CD4-positive, alpha-beta T cell (primary cell): ENCODE measurements at regions of chr1 and their contacts with region 1.

Region 1: DNA sequence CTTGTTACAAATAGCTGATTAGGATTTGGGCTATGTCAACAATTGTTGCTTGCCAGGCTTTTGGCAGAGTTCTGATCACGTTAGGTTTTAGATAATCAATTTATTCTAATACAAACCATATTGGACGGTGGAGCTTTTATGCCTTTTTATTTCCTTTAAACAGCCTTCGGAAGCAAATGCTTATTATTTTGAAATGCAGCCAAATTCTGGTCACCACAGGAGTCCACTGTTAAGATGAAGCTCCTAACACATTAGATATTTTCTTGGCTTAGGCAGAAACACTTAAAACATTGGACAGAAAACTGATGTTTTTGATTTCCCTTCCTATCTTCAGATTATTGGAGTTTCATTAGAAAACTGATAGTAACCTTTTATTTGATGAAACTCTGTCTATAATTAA is 82.9 kb downstream of the CENPF start:
- DNase-seq: no peak
- ATAC-seq: no peak
- H3K4me3 ChIP-seq: no peak overlapping the region
- H3K4me3 Mint-ChIP-seq: no peak overlapping the region
- H3K27ac ChIP-seq: no peak overlapping the region
- H3K27ac Mint-ChIP-seq: no peak overlapping the region
- H3K4me1 ChIP-seq: no peaks in the 10 kb centered on the region
- H3K4me1 Mint-ChIP-seq: no peaks in the 10 kb centered on the region
- H3K27me3 ChIP-seq: no peaks in the 10 kb centered on the region
- H3K27me3 Mint-ChIP-seq: peaks cover 4% of the 10 kb centered on the region
- CTCF ChIP-seq: no peak

Region 2: GRCh38 chr1:214670098-214670497 is 15.8 kb before region 1 on chr1:
- CTCF ChIA-PET with region 1: no interaction called
- POLR2A ChIA-PET with region 1: no interaction called
- intact Hi-C with region 1: loop called in 1 of 2 experiments (anchors 2 kb)
- DNase-seq: no peak
- ATAC-seq: no peak
- H3K4me3 ChIP-seq: no peak overlapping the region
- H3K4me3 Mint-ChIP-seq: no peak overlapping the region
- H3K27ac ChIP-seq: no peak overlapping the region
- H3K27ac Mint-ChIP-seq: no peak overlapping the region
- H3K4me1 ChIP-seq: no peaks in the 10 kb centered on the region
- H3K4me1 Mint-ChIP-seq: no peaks in the 10 kb centered on the region
- H3K27me3 ChIP-seq: no peaks in the 10 kb centered on the region
- H3K27me3 Mint-ChIP-seq: no peaks in the 10 kb centered on the region
- CTCF ChIP-seq: no peak

Region 3: DNA sequence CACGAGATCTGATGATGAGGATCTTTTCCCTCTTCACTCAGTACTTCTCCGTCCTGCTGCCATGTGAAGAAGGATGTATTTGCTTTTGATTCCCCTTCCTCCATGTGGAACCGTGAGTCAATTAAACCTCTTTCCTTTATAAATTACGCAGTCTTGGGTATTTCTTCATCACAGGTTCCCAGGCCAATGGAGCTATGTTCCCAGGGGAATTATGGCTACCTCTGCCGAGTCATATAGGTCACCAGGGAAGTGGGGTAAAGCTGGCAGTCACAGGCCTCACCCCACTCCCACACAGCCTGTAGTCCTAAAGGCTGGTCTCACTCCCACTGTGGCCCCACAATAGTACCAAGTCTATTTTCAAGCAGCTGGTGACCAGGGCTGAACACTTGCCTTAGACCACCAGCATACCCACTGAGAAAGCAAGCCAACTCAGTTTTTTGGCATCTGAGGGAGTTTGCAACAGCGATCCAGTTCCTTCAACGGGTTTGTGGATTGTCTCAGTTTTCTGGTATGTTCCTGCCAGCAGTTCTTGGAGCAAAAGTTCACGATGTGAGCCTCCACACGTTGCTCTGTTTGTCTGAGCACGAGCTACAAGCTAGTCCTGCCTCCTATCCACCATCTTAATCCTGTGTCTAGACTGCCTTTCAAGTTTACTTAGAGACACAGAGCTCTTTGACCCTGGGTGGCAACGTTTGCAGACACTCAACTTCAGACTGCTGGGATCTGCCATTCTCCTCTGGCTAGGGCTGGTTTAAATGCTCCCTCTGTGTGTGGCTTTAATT is 21.6 kb after region 1 on chr1:
- CTCF ChIA-PET with region 1: no interaction called
- POLR2A ChIA-PET with region 1: no interaction called
- intact Hi-C with region 1: no loop called
- DNase-seq: no peak
- ATAC-seq: no peak
- H3K4me3 ChIP-seq: no peak overlapping the region
- H3K4me3 Mint-ChIP-seq: no peak overlapping the region
- H3K27ac ChIP-seq: no peak overlapping the region
- H3K27ac Mint-ChIP-seq: no peak overlapping the region
- H3K4me1 ChIP-seq: no peaks in the 10 kb centered on the region
- H3K4me1 Mint-ChIP-seq: no peaks in the 10 kb centered on the region
- H3K27me3 ChIP-seq: no peaks in the 10 kb centered on the region
- H3K27me3 Mint-ChIP-seq: no peaks in the 10 kb centered on the region
- CTCF ChIP-seq: no peak